ENCODE measurements at regions of chr2 and their contacts with region 1.

Region 1: DNA sequence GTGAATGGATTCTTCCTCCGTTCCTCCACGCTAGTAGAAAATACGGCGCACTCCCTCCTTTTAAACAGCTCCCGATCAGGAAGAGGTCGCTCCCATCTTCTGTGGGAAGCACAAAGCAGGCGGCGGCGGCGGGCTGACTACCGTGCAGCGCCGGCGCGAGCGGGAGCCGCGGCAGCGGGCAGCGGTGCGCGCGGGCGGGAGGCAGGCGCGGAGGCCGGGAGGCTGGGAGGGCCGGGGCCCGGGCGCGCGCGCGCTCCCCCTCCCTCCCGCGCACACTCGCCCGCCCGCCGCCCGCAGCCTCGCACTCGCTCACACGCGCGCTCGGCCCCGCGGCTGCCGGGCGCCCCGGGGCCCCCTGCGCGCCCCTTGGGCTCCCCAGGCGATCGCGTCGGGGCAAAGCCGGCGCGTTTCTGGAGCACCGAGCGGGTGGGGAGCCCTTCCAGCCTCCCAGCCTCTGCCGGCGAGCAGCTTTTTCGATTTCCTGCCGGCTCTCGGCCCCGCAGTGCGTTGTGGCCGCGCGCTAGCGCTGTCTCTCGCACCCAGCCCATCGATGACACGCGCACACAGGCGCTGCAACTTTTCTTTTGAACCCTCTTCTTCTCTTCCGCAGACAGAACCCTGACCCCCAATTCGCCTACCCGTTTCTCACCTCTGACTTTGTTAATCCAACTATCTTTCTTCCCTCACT is at the start of gene SLC8A1:
- DNase-seq: peak in 1 of 2 experiments; percentile 39
- H3K4me3 ChIP-seq: peak within 1 kb of the TSS; percentile 65
- H3K27ac ChIP-seq: no peak within 1 kb of the TSS
- H3K4me1 ChIP-seq: 0 out of 2 replicates have a peak, but pooled peaks cover 3% of the 10 kb centered on the region
- H3K27me3 ChIP-seq: no peaks in the 10 kb centered on the region
- CTCF ChIP-seq: no peak
- total RNA-seq, gene SLC8A1: 6.5 and 13.5 TPM in 2 replicates

Region 2: GRCh38 chr2:40244675-40245074 is 207.4 kb before region 1 on chr2:
- CTCF ChIA-PET with region 1: interaction called, 3 read pairs
- POLR2A ChIA-PET with region 1: no interaction called
- intact Hi-C with region 1: loop called (anchors 2 kb)
- DNase-seq: peak; percentile 43 to 55
- H3K4me3 ChIP-seq: no peak overlapping the region
- H3K27ac ChIP-seq: no peak overlapping the region
- H3K4me1 ChIP-seq: no peaks in the 10 kb centered on the region
- H3K27me3 ChIP-seq: no peaks in the 10 kb centered on the region
- CTCF ChIP-seq: peak; percentile 78

Region 3: DNA sequence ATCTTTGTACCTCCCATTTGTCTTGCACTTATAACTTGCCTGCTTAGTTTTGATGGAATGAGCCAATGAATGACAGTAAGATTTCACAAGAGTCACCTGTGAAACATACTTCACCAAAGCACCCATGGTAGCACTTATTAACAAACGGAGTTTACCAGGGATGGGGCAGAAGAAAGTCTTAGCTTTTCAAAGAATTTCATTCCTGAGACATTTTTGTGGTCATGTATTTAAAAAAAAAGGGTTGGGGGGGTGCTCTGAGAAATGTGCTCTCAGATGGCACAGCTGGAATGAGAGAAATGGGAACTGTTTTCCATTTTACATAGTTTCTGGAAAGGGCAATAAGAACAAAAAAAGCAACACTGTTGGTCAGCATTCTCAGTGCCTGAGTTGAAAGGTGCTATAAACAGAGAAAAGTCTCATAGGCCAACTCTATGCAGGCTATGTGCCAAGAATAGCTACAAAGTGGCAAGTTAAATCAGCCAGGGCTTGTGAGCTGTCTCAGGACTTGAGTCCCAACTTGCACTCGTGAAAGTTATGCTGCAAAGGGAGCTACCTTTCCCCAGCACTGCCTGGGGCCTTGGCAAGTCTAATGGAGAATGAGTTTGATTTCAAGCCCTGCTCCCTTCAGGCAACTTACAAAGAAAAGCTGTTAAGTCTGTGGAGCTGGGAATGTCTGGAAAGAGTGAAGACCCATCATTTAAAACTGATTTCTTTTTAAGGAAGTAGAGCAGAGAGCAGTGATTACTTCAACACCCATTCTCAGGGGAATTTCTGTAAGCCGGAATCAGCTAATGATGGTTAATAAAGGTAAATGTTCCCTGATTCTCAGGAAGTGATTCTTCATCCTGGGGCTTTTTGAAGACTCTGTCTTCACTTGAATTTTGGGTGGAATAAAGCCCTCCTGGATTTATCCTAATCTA is 170.8 kb before region 1 on chr2:
- CTCF ChIA-PET with region 1: no interaction called
- POLR2A ChIA-PET with region 1: no interaction called
- intact Hi-C with region 1: loop called (anchors 5 kb)
- DNase-seq: peak in 1 of 2 experiments; percentile 24
- H3K4me3 ChIP-seq: no peak overlapping the region
- H3K27ac ChIP-seq: no peak overlapping the region
- H3K4me1 ChIP-seq: no peaks in the 10 kb centered on the region
- H3K27me3 ChIP-seq: no peaks in the 10 kb centered on the region
- CTCF ChIP-seq: no peak

Region 4: DNA sequence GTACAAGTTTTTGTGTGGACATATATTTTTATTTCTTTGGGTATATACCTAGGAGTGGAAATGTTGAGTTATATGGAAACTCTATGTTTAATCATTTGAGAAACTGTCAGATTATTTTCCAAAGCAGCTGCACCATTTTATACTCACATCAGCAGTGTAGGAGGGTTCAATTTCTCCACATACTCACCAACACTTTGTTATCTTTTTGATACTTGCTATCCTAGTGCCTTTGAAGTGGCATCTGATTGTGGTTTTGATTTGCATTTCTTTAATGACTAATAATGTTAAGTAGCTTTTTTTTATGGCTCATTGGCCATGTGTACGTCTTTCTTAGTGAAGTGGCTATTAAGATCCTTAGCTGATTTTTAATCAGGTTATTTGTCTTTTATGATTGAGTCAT is 64.5 kb after region 1 on chr2:
- CTCF ChIA-PET with region 1: no interaction called
- POLR2A ChIA-PET with region 1: no interaction called
- intact Hi-C with region 1: no loop called
- DNase-seq: no peak
- H3K4me3 ChIP-seq: no peak overlapping the region
- H3K27ac ChIP-seq: no peak overlapping the region
- H3K4me1 ChIP-seq: 0 out of 2 replicates have a peak, but pooled peaks cover 2% of the 10 kb centered on the region
- H3K27me3 ChIP-seq: no peaks in the 10 kb centered on the region
- CTCF ChIP-seq: no peak

Measured in PC-9 (cell line).